AG04450 (cell line): ENCODE measurements at regions of chr12 and their contacts with region 1.

Region 1: DNA sequence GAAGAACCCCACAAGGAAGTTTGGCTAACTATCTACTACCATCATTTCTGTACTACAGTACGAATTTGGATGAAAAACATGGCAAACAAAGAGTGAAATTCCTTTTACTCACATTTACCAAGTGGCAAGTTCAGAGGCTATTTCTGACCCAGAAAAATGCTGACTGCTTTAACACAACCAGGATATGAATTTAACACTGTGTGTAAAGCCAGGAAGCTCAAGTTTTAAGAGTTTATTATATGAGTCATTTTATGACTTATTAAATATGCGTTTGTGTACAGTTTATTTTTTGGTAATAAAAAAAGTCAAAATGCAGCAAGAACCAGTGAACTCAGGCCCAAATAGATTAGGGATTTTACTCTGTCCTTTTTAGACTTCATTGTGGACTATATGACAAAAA is 58.4 kb upstream of the STAC3 start:
- DNase-seq: no peak
- H3K4me3 ChIP-seq: no peak overlapping the region
- H3K27ac ChIP-seq: no peak overlapping the region
- H3K27me3 ChIP-seq: no peaks in the 10 kb centered on the region
- CTCF ChIP-seq: no peak

Region 2: GRCh38 chr12:57280211-57281062 is 29.0 kb before region 1 on chr12:
- CTCF ChIA-PET with region 1: interaction called, 10 read pairs
- POLR2A ChIA-PET with region 1: interaction called, 5 read pairs
- DNase-seq: peak; percentile 91
- H3K4me3 ChIP-seq: peak overlapping the region; percentile 38
- H3K27ac ChIP-seq: peak overlapping the region; percentile 74
- H3K27me3 ChIP-seq: no peaks in the 10 kb centered on the region
- CTCF ChIP-seq: no peak

Region 3: DNA sequence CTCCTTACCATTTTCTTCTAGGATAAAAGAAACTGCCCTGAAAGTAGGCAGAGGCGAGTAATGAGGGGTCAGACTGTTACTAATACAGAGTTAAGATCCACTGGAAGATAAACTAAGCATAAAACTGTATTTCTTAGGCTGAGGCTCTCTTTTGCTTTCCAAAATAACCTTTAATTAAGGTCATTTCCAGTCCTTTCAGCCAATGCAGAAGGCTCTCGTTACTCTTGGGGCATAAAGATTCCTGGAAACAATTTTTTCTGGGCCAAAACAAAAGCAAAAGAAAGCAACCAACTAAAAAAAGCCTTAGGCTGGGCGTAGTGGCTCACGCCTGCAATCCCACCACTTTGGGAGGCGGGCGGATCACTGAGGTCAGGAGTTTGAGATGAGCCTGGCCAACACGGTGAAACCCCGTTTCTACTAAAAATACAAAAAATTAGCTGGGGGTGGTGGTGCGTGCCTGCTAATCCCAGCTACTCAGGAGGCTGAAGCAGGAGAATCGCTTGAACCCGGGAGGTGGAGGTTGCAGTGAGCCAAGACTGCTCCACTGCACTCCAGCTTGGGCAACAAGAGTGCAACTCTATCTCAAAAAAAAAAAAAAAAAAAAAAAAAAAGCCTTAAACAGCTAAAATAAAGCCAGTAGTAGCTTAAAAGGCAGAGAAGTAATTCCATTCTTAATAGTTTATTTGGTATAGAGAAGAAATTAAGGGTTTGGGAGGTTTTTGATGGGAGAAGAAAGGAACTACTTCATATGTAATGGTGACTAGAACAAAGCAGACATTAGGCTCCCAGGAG is 10.5 kb after region 1 on chr12:
- CTCF ChIA-PET with region 1: interaction called, 19 read pairs
- POLR2A ChIA-PET with region 1: no interaction called
- DNase-seq: no peak
- H3K4me3 ChIP-seq: no peak overlapping the region
- H3K27ac ChIP-seq: no peak overlapping the region
- H3K27me3 ChIP-seq: no peaks in the 10 kb centered on the region
- CTCF ChIP-seq: no peak

Region 4: GRCh38 chr12:57332646-57333312 is 23.4 kb after region 1 on chr12:
- CTCF ChIA-PET with region 1: interaction called, 10 read pairs
- POLR2A ChIA-PET with region 1: no interaction called
- DNase-seq: no peak
- H3K4me3 ChIP-seq: no peak overlapping the region
- H3K27ac ChIP-seq: no peak overlapping the region
- H3K27me3 ChIP-seq: no peaks in the 10 kb centered on the region
- CTCF ChIP-seq: no peak

Region 5: DNA sequence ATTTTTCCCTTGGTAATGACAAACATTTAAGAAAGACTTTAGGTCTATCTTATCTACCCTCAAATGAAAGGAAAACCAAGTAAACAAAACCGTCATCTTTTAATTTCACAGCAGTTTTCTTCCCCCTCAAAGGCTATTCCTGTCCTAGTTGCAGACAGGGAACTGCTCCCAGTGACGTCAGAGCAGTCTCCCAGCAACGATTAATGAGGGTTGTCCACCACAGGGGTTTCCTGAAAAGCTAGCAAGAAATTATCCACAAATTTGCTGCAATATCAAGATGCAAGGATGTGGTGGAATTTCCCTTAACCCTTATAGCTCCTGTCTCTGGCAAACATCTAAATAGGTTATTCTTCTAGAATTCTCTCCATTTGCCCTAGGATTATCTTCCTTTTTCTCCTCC is 30.7 kb after region 1 on chr12:
- CTCF ChIA-PET with region 1: interaction called, 18 read pairs
- POLR2A ChIA-PET with region 1: no interaction called
- DNase-seq: peak; percentile 16
- H3K4me3 ChIP-seq: no peak overlapping the region
- H3K27ac ChIP-seq: no peak overlapping the region
- H3K27me3 ChIP-seq: no peaks in the 10 kb centered on the region
- CTCF ChIP-seq: no peak

Region 6: GRCh38 chr12:57438400-57438799 is 129.0 kb after region 1 on chr12:
- CTCF ChIA-PET with region 1: no interaction called
- POLR2A ChIA-PET with region 1: no interaction called
- DNase-seq: no peak
- H3K4me3 ChIP-seq: no peak overlapping the region
- H3K27ac ChIP-seq: no peak overlapping the region
- H3K27me3 ChIP-seq: no peaks in the 10 kb centered on the region
- CTCF ChIP-seq: no peak